A673 (cell line): ENCODE measurements at regions of chr13 and their contacts with region 1.

Region 1: DNA sequence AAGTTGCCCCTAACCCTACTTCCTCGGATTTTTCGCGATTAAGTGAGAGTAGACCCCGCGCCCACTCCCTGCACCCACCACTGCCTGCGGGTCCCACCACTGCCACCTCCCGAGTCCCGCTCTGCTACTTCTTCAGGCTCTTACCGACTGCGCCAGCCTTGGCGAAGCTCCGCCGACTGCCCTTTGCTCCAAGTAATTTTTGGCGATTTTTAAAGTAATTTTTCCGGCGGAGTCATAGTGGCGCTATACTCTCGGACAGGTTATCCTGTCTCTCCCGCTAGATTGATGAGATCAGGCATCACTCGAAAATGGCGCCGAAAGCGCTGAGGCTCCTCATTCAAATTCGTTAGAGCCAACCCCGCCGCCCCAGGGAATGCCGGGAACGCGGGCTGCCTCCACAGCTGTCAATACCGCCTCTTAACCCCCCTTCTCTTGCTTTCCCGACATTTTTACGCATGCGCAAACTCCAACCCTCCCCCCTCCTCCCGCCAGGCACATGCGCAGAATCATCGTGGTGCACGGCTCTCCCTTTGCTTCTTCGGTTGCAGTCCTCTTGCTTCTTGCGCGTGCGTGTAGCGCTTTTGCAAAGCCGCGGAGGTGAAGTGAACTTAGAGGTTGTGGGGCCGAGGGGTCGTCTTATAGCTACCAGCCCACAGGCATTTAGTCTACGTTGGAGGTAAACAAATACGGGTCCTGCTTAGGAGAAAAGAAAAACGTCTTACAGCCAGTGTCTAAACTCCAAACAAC is 66.6 kb downstream of the KCNRG start:
- DNase-seq: peak; percentile 99
- H3K4me3 ChIP-seq: peak overlapping the region; percentile 87
- H3K27ac ChIP-seq: peak overlapping the region; percentile 98
- H3K4me1 ChIP-seq: peaks cover 27% of the 10 kb centered on the region
- H3K27me3 ChIP-seq: no peaks in the 10 kb centered on the region
- CTCF ChIP-seq: peak; percentile 43

Region 2: DNA sequence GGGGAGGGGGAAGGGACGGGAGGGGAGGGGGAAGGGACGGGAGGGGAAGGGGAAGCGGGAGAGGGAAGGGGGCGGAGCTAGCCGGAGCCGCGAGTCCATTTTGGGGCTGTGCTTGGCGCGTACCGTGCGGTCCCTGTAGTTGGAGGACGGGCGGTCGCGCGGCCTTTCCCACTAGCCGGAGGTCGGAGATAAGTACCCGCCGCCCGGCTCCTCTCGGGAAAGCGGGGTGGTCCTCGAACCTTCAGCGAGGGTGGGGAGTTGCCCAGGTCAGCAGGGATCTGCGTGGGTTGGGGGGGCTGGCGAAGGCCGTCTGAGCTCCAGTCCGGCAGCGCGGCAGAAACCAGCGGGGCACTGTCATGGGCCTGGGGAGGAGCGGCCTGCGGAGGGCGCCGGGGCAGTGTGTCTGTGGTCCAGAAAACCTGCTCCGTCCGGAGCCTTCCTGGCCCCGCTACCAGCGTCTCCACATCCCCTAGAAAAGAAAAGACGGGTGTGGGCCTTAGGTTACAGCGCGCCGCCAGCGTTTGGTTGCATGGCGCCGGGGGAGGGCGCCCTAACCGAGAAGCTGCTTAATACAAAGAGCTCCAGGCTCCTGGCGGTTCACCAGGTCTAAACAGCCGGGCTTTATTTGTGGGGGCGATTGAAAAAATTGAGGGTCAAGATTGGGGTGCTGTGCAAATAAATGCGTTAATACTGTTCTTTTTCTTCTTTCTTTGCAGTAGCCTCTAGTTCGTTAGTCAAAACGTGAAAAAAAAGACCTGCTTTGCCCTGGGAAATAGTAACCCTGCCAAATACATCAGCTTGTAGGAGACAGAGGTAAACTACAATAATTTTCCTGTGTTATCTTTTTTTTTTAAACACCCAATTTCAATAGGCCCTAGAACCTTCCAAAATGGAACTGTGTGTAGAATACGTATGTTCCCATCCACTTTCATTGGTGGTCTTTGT is 84.6 kb before region 1 on chr13 and contains the start of gene TRIM13:
- CTCF ChIA-PET with region 1: interaction called, 7 read pairs
- POLR2A ChIA-PET with region 1: no interaction called
- intact Hi-C with region 1: loop called (anchors 2 kb)
- DNase-seq: peak; percentile 92
- H3K4me3 ChIP-seq: peak within 1 kb of the TSS; percentile 98
- H3K27ac ChIP-seq: peak within 1 kb of the TSS; percentile 98
- H3K4me1 ChIP-seq: peaks cover 23% of the 10 kb centered on the region
- H3K27me3 ChIP-seq: no peaks in the 10 kb centered on the region
- CTCF ChIP-seq: peak; percentile 93
- total RNA-seq, gene TRIM13: 36.9 and 38.7 TPM in 2 replicates

Region 3: DNA sequence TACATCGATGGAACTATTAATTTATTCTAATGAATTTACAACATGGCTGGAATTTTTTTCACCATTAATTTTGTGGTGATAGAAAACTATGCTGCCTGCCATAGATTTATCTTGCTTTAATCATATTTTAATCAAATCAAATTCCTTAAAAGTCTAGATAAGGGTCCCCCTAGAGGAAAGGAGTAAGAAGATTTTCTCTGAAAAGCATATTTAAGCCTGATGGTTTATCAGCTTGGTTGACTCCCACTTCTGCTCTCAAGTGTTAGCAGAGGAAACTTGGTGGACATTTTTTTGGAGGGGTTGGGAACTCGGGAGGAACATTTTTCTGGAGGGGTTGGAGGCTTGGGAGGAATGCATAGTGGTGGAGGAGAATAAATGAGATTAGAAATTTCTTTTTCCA is 186.6 kb after region 1 on chr13:
- CTCF ChIA-PET with region 1: no interaction called
- POLR2A ChIA-PET with region 1: no interaction called
- intact Hi-C with region 1: loop called (anchors 5 kb)
- DNase-seq: peak; percentile 18
- H3K4me3 ChIP-seq: no peak overlapping the region
- H3K27ac ChIP-seq: no peak overlapping the region
- H3K4me1 ChIP-seq: no peaks in the 10 kb centered on the region
- H3K27me3 ChIP-seq: no peaks in the 10 kb centered on the region
- CTCF ChIP-seq: peak; percentile 41

Region 4: GRCh38 chr13:50801087-50801931 is 719.5 kb after region 1 on chr13:
- CTCF ChIA-PET with region 1: no interaction called
- POLR2A ChIA-PET with region 1: no interaction called
- intact Hi-C with region 1: loop called (anchors 10 kb)
- DNase-seq: peak; percentile 76
- H3K4me3 ChIP-seq: no peak overlapping the region
- H3K27ac ChIP-seq: no peak overlapping the region
- H3K4me1 ChIP-seq: no peaks in the 10 kb centered on the region
- H3K27me3 ChIP-seq: no peaks in the 10 kb centered on the region
- CTCF ChIP-seq: peak; percentile 79

Region 5: DNA sequence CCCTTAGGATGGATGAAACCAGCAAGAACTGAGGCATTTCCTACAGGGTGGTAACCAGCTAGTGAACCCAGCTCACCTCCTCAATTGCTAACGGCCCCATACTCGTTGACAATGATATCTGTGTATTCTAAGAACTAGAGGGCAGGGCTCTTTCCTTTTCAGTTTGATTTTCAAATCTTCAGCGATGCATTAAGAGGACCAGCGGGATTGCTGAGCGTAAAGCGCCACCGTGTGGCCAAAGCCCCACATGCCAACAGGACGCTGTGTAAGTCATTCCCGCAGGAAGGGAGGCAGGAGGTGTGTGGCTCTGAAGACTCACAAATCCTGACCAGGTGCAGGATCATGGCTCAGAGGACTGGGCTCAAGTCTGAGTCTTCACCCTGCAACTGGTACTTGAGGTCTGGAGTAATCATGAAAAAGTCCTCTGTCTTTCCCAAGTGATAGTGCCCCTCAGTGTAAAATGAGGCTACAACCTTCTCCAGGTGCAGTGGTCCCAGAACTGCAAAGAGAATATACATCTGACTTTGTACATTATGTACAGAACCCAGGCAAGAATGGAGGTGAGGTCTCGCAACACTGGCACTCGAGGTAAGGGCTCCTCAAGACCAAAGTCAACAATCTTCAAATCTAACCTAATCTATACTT is 988.3 kb after region 1 on chr13:
- CTCF ChIA-PET with region 1: no interaction called
- POLR2A ChIA-PET with region 1: no interaction called
- intact Hi-C with region 1: loop called (anchors 10 kb)
- DNase-seq: peak; percentile 85
- H3K4me3 ChIP-seq: no peak overlapping the region
- H3K27ac ChIP-seq: no peak overlapping the region
- H3K4me1 ChIP-seq: no peaks in the 10 kb centered on the region
- H3K27me3 ChIP-seq: no peaks in the 10 kb centered on the region
- CTCF ChIP-seq: peak; percentile 91